ENCODE measurements at regions of chr1 and their contacts with region 1.

Region 1: DNA sequence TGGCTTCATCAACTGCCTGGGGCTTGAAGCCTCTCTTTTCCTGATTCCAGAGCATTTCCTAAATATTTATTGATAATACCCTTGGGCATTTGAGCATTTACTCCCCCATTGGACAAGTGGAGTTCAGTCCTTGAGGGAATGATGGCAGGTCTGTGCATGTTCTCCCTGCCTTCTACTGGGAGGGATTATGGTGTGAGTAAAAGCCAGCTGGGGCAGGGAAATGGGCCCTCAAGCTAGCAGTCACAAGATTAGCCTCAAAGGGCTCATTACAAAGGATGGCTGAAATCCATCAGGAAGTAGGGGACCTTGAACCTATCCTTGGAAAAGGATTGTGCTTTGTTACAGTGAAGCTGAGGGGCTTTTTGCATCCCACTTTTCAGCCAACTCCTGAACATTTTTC is 24.2 kb upstream of the OSBPL9 start:
- DNase-seq: no peak
- H3K4me3 ChIP-seq: no peak overlapping the region
- H3K27ac ChIP-seq: no peak overlapping the region
- H3K4me1 ChIP-seq: no peaks in the 10 kb centered on the region
- H3K27me3 ChIP-seq: no peaks in the 10 kb centered on the region
- CTCF ChIP-seq: no peak

Region 2: DNA sequence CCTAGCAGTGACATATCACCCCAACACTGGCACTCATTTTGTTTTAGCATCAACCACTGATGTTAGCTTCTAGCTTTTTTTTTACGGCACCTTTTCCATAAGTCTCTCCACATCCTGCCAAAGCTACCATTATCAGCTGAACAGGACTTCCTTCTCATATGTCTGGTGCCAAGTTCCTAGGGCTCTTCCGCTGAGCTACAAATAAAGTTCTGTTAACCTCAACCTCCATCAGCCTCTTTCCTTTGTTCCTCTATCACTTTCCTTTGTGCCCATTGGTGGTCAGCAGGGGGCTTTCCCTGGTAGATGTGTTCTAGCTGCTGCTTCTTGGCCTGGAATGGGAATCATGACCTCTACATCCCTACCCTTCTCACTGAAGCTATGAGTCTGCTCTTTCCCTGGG is 796.4 kb before region 1 on chr1:
- CTCF ChIA-PET with region 1: no interaction called
- POLR2A ChIA-PET with region 1: no interaction called
- intact Hi-C with region 1: no loop called
- DNase-seq: no peak
- H3K4me3 ChIP-seq: no peak overlapping the region
- H3K27ac ChIP-seq: no peak overlapping the region
- H3K4me1 ChIP-seq: peaks cover 10% of the 10 kb centered on the region
- H3K27me3 ChIP-seq: no peaks in the 10 kb centered on the region
- CTCF ChIP-seq: no peak

Region 3: GRCh38 chr1:51088488-51088887 is 504.2 kb before region 1 on chr1:
- CTCF ChIA-PET with region 1: no interaction called
- POLR2A ChIA-PET with region 1: interaction called, 10 read pairs
- intact Hi-C with region 1: no loop called
- DNase-seq: no peak
- H3K4me3 ChIP-seq: no peak overlapping the region
- H3K27ac ChIP-seq: no peak overlapping the region
- H3K4me1 ChIP-seq: no peaks in the 10 kb centered on the region
- H3K27me3 ChIP-seq: peaks cover 19% of the 10 kb centered on the region
- CTCF ChIP-seq: peak; percentile 33; the same call in 1 of the 2 replicates

Region 4: GRCh38 chr1:51296383-51297357 is 296.0 kb before region 1 on chr1:
- CTCF ChIA-PET with region 1: interaction called, 10 read pairs
- POLR2A ChIA-PET with region 1: no interaction called
- intact Hi-C with region 1: no loop called
- DNase-seq: peak; percentile 90
- H3K4me3 ChIP-seq: peak overlapping the region; percentile 30
- H3K27ac ChIP-seq: no peak overlapping the region
- H3K4me1 ChIP-seq: peaks cover 10% of the 10 kb centered on the region
- H3K27me3 ChIP-seq: no peaks in the 10 kb centered on the region
- CTCF ChIP-seq: peak; percentile 99